Heart left ventricle (tissue), 16 donors: ENCODE measurements at regions of chr11 and their contacts with region 1.

Region 1: DNA sequence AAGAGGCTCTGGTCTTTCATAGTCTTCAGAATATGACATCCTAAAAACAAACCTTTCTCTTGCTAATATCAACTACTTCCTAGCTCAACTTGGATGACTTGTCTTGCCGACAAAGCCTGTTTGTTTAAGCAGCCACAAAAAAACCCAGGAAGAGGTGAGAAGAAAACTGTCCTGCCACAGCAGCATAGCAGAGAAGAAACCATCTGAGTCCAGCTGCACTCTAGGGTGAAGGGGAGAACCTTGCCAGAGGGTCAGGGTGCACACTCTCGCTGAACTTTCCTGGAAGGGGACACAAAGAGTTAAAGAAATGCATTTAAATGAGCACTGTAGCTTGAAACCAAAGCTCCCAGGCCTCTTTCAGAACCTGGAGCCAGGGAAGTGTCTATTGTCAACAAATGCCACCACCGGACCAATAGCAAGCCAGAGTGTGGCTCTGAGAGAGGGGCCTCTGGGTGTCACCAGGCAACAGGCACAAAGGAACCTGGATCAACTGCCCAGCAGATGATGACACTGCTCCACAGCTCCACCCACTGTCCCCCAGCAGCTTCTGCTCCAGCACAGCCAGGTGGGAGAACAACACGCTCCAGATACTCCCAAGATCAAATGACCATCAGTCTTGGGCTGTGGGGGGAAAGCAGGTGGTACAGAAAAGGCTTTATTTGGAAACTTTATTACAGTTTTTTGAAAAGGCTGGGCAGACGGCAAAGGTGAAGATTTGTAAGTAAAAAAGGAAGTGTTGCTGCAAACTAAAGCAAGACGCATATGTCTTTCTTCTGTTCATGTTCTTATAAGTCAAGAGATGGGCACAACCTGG is 105.7 kb downstream of the RASSF10 start:
- DNase-seq: no peak
- ATAC-seq: no peak
- H3K4me3 ChIP-seq: no peak overlapping the region
- H3K27ac ChIP-seq: no peak overlapping the region
- H3K4me1 ChIP-seq: peaks cover 0 to 20% (median 10%) of the 10 kb centered on the region in 12 donors
- H3K27me3 ChIP-seq: no peaks in the 10 kb centered on the region
- CTCF ChIP-seq: peak in 1 of 12 donors; percentile 14
- POLR2A ChIP-seq: no peak

Region 2: GRCh38 chr11:13030857-13031256 is 83.9 kb before region 1 on chr11:
- intact Hi-C with region 1: loop called in 1 of 10 experiments (anchors 5 kb)
- DNase-seq: peak; percentile 56 to 75 (median 60)
- ATAC-seq: peak; percentile 47 to 79 (median 71)
- H3K4me3 ChIP-seq: no peak overlapping the region
- H3K27ac ChIP-seq: peak overlapping the region in 3 of 12 donors; percentile 11 to 55 (median 38)
- H3K4me1 ChIP-seq: peaks cover 0 to 34% (median 8%) of the 10 kb centered on the region in 12 donors
- H3K27me3 ChIP-seq: peaks cover 0 to 11% (median 0%) of the 10 kb centered on the region in 9 donors
- CTCF ChIP-seq: no peak
- POLR2A ChIP-seq: no peak

Region 3: DNA sequence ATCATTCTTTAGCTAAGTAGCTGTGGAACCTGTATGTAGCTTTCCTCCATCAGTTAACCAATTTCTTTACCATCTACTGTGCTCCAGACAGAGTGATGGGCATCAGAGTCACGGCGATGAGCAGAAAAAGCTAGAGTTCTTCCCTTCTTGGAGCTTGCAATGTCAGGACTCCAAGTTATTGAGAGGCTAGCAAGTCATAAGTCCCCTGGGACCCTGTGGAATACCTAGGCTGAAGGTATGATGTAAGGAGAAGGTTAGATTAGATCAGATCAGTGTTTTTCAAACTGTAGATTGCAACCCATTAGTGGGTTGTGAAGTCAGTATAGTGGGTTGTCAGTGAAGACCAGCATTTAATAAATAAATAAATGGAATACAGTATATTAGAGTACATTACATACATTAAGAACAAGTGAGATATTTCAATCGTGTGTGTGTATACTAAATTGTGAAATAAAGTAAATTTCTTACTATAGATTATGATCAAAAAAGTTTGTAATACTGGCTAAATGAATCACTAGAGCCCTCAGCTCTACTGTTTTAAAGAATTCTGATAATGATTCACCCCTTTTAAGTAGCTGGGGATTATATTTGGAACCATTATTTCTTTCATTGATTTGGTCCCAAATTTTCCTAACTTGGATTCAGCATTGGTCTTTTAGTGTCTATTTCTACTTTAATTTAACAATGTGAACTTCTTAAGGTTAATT is 53.3 kb before region 1 on chr11:
- intact Hi-C with region 1: no loop called
- DNase-seq: no peak
- ATAC-seq: no peak
- H3K4me3 ChIP-seq: no peak overlapping the region
- H3K27ac ChIP-seq: no peak overlapping the region
- H3K4me1 ChIP-seq: no peaks in the 10 kb centered on the region
- H3K27me3 ChIP-seq: peaks cover 0 to 6% (median 0%) of the 10 kb centered on the region in 9 donors
- CTCF ChIP-seq: no peak
- POLR2A ChIP-seq: no peak